Endothelial cell of umbilical vein (primary cell): ENCODE measurements at regions of chr19 and their contacts with region 1.

Region 1: GRCh38 chr19:47391510-47392223 is 27.7 kb downstream of the MEIS3 start:
- DNase-seq: peak; percentile 60
- H3K4me3 ChIP-seq: no peak overlapping the region
- H3K27ac ChIP-seq: no peak overlapping the region
- H3K4me1 ChIP-seq: no peaks in the 10 kb centered on the region
- H3K27me3 ChIP-seq: no peaks in the 10 kb centered on the region
- CTCF ChIP-seq: peak; percentile 77 to 90
- POLR2A ChIP-seq: no peak

Region 2: DNA sequence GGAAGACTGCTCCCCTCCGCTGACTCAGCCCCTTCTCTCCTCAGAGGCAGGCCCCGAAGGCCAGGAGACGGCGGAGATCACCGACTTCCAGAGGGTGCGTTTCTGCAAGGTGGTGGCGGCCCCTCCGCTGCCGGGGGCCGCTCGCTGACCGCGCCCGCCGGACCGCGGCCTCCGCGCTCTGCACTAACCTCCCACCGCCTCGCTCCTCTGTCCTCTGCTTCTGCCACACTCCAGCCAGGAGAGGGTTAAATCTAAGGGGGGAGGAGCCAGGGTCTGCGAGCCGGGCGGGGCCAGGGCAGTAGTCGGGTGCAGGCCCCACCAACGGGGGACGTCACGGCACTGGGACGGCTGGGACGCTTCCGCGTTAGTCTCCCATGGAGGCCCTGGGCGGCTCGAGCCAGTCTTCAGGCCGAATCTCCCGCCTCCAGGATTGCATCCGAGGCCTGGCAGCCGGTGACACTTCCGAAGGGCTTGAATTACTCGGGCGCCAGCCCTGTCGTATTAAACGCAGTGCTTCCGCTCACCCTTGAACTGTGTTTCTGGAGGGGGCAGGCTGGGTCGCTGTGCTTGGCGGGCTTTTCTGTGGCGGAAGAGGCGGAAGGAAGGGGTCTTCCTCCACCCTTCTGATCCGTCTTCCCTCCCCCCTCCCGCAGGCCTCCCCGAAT is 118.2 kb before region 1 on chr19:
- CTCF ChIA-PET with region 1: interaction called, 12 read pairs
- POLR2A ChIA-PET with region 1: no interaction called
- dilution Hi-C with region 1: no loop called
- intact Hi-C with region 1: no loop called
- DNase-seq: peak; percentile 91
- H3K4me3 ChIP-seq: peak overlapping the region; percentile 16 to 67 (median 64)
- H3K27ac ChIP-seq: peak overlapping the region; percentile 92
- H3K4me1 ChIP-seq: peaks cover 13% of the 10 kb centered on the region
- H3K27me3 ChIP-seq: no peaks in the 10 kb centered on the region
- CTCF ChIP-seq: no peak
- POLR2A ChIP-seq: peak; percentile 75

Region 3: DNA sequence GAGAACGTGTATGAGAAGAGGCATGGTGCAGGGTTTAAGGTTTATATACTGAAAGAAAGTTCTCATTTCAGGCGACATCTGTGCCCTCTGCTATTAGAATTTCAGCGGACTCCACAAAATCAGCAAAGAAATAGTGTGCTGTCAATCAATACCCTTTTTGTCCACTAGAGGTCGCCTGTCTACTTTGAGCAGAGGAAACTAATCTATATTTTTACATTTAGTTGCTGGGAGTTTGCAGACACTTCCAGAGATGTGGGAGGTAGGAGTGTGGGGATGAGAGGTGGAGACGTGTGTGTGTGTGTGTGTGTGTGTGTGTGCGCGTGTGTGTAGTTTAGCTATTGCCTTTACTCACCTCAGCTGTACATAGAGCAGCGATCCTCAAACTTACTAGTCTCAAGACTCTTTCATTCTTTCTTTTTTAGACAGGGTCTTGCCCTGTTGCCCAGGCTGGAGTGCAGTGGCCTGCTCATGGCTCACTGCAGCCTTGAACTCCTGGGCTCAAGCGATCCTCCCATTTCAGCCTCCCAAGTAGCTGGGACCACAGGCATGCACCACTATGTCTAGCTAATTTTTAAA is 107.3 kb before region 1 on chr19:
- CTCF ChIA-PET with region 1: interaction called, 187 read pairs
- POLR2A ChIA-PET with region 1: no interaction called
- dilution Hi-C with region 1: no loop called
- intact Hi-C with region 1: loop called (anchors 1 kb)
- DNase-seq: peak; percentile 57
- H3K4me3 ChIP-seq: no peak overlapping the region
- H3K27ac ChIP-seq: no peak overlapping the region
- H3K4me1 ChIP-seq: no peaks in the 10 kb centered on the region
- H3K27me3 ChIP-seq: no peaks in the 10 kb centered on the region
- CTCF ChIP-seq: peak; percentile 77
- POLR2A ChIP-seq: no peak

Region 4: DNA sequence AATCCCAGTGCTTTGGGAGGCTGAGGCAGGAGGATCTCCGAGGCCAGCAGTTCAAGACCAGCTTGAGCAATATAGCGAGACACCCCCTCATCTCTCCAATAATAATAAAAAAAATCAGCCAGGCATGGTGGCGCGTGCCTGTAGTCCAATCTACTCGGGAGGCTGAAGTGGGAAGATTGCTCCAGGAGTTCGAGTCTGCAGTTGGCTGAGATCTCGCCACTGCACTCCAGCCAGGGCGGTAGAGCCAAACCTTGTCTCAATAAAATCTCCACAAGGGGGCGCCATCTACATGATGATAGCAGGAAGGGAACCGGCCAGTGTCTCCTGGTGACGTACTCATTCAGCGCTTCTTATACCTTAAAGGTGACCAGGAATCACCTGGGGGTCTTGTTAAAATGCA is 95.6 kb before region 1 on chr19:
- CTCF ChIA-PET with region 1: interaction called, 187 read pairs
- POLR2A ChIA-PET with region 1: no interaction called
- dilution Hi-C with region 1: no loop called
- intact Hi-C with region 1: loop called (anchors 1 kb)
- DNase-seq: peak; percentile 55
- H3K4me3 ChIP-seq: no peak overlapping the region
- H3K27ac ChIP-seq: no peak overlapping the region
- H3K4me1 ChIP-seq: no peaks in the 10 kb centered on the region
- H3K27me3 ChIP-seq: no peaks in the 10 kb centered on the region
- CTCF ChIP-seq: peak; percentile 62 to 70
- POLR2A ChIP-seq: no peak

Region 5: DNA sequence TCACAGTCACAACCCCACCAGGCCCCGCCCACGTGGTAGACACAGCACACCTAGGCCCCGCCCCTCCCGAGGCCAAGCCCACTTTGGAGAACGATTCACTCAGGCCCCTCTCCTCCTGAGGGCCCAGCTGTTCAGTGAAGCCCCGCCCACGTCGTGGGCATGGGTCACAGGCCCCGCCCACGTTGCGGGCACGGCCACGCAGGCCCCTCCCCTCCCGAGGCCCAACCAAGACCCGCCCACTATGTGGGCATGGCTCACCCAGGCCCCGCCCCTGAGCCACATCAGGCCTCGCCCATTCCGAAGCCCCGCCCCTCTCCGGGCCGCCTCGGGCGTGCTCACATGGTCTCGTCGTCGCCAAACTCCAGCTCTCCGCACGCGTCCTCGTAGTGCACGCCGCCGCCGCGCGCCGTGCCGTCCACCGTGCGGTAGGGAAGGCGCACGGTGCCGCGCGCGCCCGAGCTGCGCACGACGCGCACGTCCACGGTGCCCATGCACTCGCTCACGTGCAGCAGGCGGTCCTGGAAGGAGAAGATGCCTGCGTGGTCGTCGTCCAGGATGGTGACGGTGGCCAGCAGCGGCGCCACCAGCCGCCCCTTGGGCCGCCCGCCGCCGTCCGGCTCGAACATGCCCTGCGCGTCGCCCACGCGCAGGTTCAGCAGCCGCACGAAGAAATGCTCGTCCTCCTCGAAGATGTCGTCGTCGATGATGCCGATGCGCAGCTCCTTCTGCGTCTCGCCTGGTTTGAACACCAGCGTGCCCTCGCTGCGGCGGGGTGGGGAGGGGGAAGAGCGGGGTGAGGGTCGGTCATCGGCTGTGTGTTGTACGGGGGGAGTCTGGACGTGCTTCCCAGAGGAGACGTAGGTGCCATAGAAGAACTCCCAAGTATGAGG is 56.0 kb after region 1 on chr19:
- CTCF ChIA-PET with region 1: no interaction called
- POLR2A ChIA-PET with region 1: no interaction called
- dilution Hi-C with region 1: no loop called
- intact Hi-C with region 1: no loop called
- DNase-seq: peak; percentile 44
- H3K4me3 ChIP-seq: no peak overlapping the region
- H3K27ac ChIP-seq: no peak overlapping the region
- H3K4me1 ChIP-seq: no peaks in the 10 kb centered on the region
- H3K27me3 ChIP-seq: peaks cover 27 to 32% of the 10 kb centered on the region in 2 experiments
- CTCF ChIP-seq: no peak
- POLR2A ChIP-seq: no peak